CD4-positive, alpha-beta T cell (primary cell): ENCODE measurements at regions of chr1 and their contacts with region 1.

Region 1: GRCh38 chr1:65265651-65266351 is 43.5 kb upstream of the DNAJC6 start:
- DNase-seq: peak in 12 of 14 experiments; percentile 10 to 68 (median 31)
- ATAC-seq: peak; percentile 83
- H3K4me3 ChIP-seq: peak overlapping the region; percentile 62
- H3K4me3 Mint-ChIP-seq: peak overlapping the region; percentile 64
- H3K27ac ChIP-seq: no peak overlapping the region
- H3K27ac Mint-ChIP-seq: no peak overlapping the region
- H3K4me1 ChIP-seq: peaks cover 10% of the 10 kb centered on the region
- H3K4me1 Mint-ChIP-seq: peaks cover 22% of the 10 kb centered on the region
- H3K27me3 ChIP-seq: peaks cover 10 to 37% of the 10 kb centered on the region in 2 experiments
- H3K27me3 Mint-ChIP-seq: peaks cover 41% of the 10 kb centered on the region
- CTCF ChIP-seq: no peak

Region 2: DNA sequence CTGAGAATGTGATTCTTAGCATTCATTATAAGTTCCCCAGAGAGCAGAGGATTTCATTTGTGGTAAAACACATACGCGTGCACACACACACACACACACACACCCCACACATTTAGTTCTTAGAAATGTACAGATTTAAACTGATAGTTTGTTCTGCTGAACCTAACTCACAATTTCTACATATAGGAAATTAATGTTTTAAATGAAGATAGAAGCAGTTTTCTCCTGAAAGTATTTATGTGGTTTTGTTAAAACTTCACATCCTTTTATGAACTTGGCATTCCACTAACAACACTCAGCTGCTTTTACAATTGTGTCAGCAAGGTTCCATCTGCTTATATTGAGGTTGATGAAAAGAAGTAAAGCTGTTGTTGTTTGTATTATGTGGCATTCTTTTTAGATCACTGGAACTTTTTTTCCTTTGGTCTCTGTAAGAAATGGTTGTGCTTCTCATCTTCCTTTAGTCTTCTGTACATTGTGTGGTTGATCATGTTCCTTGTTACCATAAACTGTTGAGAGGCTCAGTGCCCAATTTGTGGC is 76.2 kb before region 1 on chr1:
- CTCF ChIA-PET with region 1: no interaction called
- POLR2A ChIA-PET with region 1: no interaction called
- intact Hi-C with region 1: no loop called
- DNase-seq: no peak
- ATAC-seq: no peak
- H3K4me3 ChIP-seq: no peak overlapping the region
- H3K4me3 Mint-ChIP-seq: no peak overlapping the region
- H3K27ac ChIP-seq: no peak overlapping the region
- H3K27ac Mint-ChIP-seq: no peak overlapping the region
- H3K4me1 ChIP-seq: no peaks in the 10 kb centered on the region
- H3K4me1 Mint-ChIP-seq: no peaks in the 10 kb centered on the region
- H3K27me3 ChIP-seq: no peaks in the 10 kb centered on the region
- H3K27me3 Mint-ChIP-seq: no peaks in the 10 kb centered on the region
- CTCF ChIP-seq: no peak

Region 3: DNA sequence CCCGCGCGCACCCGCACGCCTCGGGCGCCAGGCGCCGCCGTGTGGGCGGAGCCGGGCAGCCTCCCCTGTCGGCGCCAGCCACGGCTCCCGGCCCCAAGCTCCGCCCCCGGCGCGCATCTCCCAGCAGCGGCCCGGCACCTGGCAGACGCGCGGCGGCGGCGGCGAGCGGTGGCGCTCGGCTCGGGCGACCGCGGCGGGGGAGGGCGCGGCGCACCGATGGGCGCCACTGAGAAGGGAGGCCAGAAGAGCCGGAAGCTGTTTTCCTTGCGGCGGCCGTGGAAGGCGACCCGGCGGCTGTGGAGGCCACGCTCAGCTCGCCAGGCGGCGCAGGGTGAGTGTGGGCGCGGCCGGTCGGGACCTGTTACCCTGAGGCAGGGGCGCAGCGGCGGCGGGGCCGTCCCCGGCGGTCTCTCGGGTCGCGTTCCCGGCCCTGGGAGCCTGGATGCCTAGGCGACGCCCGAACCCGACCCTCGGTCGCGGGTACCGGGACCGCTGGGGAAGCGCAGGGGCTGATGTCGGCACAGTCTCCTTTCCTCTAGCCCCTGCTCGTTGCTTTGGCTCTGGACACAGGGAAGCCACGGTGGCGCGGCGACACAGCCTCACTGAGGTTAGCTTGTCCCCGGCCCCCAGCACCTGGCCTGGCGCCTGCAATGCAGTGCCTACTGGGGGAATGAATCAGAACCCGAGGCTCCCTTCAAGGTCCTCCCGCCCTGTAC is 11.3 kb before region 1 on chr1:
- CTCF ChIA-PET with region 1: interaction called, 4 read pairs
- POLR2A ChIA-PET with region 1: interaction called, 37 read pairs
- intact Hi-C with region 1: no loop called
- DNase-seq: peak; percentile 70 to 93 (median 84)
- ATAC-seq: peak; percentile 97
- H3K4me3 ChIP-seq: peak overlapping the region; percentile 65
- H3K4me3 Mint-ChIP-seq: peak overlapping the region; percentile 91
- H3K27ac ChIP-seq: no peak overlapping the region
- H3K27ac Mint-ChIP-seq: peak overlapping the region; percentile 57
- H3K4me1 ChIP-seq: peaks cover 21% of the 10 kb centered on the region
- H3K4me1 Mint-ChIP-seq: peaks cover 12% of the 10 kb centered on the region
- H3K27me3 ChIP-seq: peaks cover 3 to 5% of the 10 kb centered on the region in 2 experiments
- H3K27me3 Mint-ChIP-seq: peaks cover 15% of the 10 kb centered on the region
- CTCF ChIP-seq: no peak